H1 (cell line): ENCODE measurements at regions of chr15 and their contacts with region 1.

Region 1: DNA sequence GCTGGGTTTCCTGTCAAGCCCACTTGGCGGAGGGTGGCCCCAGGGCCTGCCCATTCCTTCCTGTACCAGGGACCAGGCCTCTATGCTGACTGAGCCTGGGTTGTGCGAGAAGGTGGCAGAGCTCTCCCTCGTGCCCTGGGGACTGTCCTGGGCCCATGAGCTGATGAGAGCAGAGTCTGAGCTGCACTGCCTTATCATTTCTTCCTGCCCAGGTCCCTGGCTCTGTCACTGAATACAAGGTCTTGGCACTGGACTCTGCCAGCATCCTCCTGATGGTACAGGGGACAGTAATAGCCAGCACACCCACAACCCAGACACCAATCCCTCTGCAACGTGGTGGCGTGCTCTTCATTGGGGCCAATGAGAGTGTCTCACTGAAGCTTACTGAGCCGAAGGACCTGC is 7.5 kb downstream of the MPI start:
- DNase-seq: no peak
- H3K4me3 ChIP-seq: no peak overlapping the region
- H3K27ac ChIP-seq: no peak overlapping the region
- H3K4me1 ChIP-seq: no peaks in the 10 kb centered on the region
- H3K27me3 ChIP-seq: no peaks in the 10 kb centered on the region
- CTCF ChIP-seq: no peak
- EP300 ChIP-seq: no peak
- POLR2A ChIP-seq: peak in 1 of 2 experiments; percentile 40; a peak in 1 of 3 replicates
- RAD21 ChIP-seq: no peak

Region 2: GRCh38 chr15:74873036-74873755 is 24.1 kb before region 1 on chr15 and contains the start of gene SCAMP2:
- CTCF ChIA-PET with region 1: interaction called, 16 read pairs
- POLR2A ChIA-PET with region 1: interaction called, 10 read pairs
- DNase-seq: peak; percentile 84 to 96
- H3K4me3 ChIP-seq: peak within 1 kb of the TSS; percentile 80 to 98 (median 93)
- H3K27ac ChIP-seq: peak within 1 kb of the TSS; percentile 92; the same call in 1 of the 2 replicates
- H3K4me1 ChIP-seq: peaks cover 0 to 3% (median 0%) of the 10 kb centered on the region in 4 experiments; a peak in 1 of 7 replicates
- H3K27me3 ChIP-seq: no peaks in the 10 kb centered on the region
- CTCF ChIP-seq: no peak
- EP300 ChIP-seq: no peak
- POLR2A ChIP-seq: peak; percentile 81 to 92
- RAD21 ChIP-seq: no peak
- total RNA-seq, gene SCAMP2: 40.3 and 41.7 TPM in 2 replicates

Region 3: DNA sequence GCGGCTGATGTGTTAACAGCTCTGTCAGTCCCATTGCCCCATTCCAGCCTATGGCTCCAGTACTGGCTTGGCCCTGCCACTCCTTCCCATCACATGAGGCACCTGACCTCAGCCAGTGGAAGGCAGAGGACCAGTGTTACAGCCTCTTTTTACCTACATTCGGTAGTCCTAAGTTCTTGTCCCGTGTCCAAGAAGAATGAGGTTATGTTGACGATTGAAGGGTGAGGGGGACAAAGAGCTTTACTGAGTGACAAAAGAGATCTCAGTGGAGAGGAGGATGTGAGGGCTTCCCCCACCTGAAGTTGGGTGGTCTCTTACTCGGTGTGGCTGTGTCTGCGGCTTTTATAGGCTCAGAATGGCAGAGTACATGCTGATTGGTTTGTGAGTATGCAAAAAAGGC is 14.8 kb before region 1 on chr15:
- CTCF ChIA-PET with region 1: interaction called, 15 read pairs
- POLR2A ChIA-PET with region 1: interaction called, 18 read pairs
- DNase-seq: no peak
- H3K4me3 ChIP-seq: no peak overlapping the region
- H3K27ac ChIP-seq: no peak overlapping the region
- H3K4me1 ChIP-seq: peaks cover 0 to 3% (median 1%) of the 10 kb centered on the region in 4 experiments; a peak in 3 of 7 replicates
- H3K27me3 ChIP-seq: no peaks in the 10 kb centered on the region
- CTCF ChIP-seq: no peak
- EP300 ChIP-seq: no peak
- POLR2A ChIP-seq: no peak
- RAD21 ChIP-seq: no peak

Region 4: GRCh38 chr15:75045332-75046015 is 148.2 kb after region 1 on chr15:
- CTCF ChIA-PET with region 1: no interaction called
- POLR2A ChIA-PET with region 1: no interaction called
- DNase-seq: no peak
- H3K4me3 ChIP-seq: no peak overlapping the region
- H3K27ac ChIP-seq: no peak overlapping the region
- H3K4me1 ChIP-seq: peaks cover 0 to 12% (median 8%) of the 10 kb centered on the region in 4 experiments; a peak in 5 of 7 replicates
- H3K27me3 ChIP-seq: no peaks in the 10 kb centered on the region
- CTCF ChIP-seq: no peak
- EP300 ChIP-seq: no peak
- POLR2A ChIP-seq: no peak
- RAD21 ChIP-seq: no peak